CD14-positive monocyte (primary cell): ENCODE measurements at regions of chr20 and their contacts with region 1.

Region 1: GRCh38 chr20:10476319-10476724 is 41.2 kb downstream of the SLX4IP start:
- DNase-seq: peak; percentile 70 to 85 (median 83)
- H3K4me3 ChIP-seq: peak overlapping the region in 1 of 3 experiments; percentile 45
- H3K4me3 Mint-ChIP-seq: peak overlapping the region in 1 of 2 donors; percentile 55
- H3K27ac ChIP-seq: peak overlapping the region in 1 of 2 donors; percentile 41
- H3K27ac Mint-ChIP-seq: peak overlapping the region; percentile 74 to 87 (median 80)
- H3K4me1 ChIP-seq: peaks cover 32 to 35% of the 10 kb centered on the region in 2 donors
- H3K4me1 Mint-ChIP-seq: peaks cover 30% of the 10 kb centered on the region
- H3K27me3 ChIP-seq: no peaks in the 10 kb centered on the region
- H3K27me3 Mint-ChIP-seq: no peaks in the 10 kb centered on the region
- CTCF ChIP-seq: peak; percentile 28

Region 2: GRCh38 chr20:10398822-10399369 is 77.4 kb before region 1 on chr20:
- intact Hi-C with region 1: no loop called
- DNase-seq: no peak
- H3K4me3 ChIP-seq: no peak overlapping the region
- H3K4me3 Mint-ChIP-seq: no peak overlapping the region
- H3K27ac ChIP-seq: no peak overlapping the region
- H3K27ac Mint-ChIP-seq: no peak overlapping the region
- H3K4me1 ChIP-seq: peaks cover 2 to 6% of the 10 kb centered on the region in 2 donors
- H3K4me1 Mint-ChIP-seq: peaks cover 9% of the 10 kb centered on the region
- H3K27me3 ChIP-seq: no peaks in the 10 kb centered on the region
- H3K27me3 Mint-ChIP-seq: no peaks in the 10 kb centered on the region
- CTCF ChIP-seq: no peak

Region 3: DNA sequence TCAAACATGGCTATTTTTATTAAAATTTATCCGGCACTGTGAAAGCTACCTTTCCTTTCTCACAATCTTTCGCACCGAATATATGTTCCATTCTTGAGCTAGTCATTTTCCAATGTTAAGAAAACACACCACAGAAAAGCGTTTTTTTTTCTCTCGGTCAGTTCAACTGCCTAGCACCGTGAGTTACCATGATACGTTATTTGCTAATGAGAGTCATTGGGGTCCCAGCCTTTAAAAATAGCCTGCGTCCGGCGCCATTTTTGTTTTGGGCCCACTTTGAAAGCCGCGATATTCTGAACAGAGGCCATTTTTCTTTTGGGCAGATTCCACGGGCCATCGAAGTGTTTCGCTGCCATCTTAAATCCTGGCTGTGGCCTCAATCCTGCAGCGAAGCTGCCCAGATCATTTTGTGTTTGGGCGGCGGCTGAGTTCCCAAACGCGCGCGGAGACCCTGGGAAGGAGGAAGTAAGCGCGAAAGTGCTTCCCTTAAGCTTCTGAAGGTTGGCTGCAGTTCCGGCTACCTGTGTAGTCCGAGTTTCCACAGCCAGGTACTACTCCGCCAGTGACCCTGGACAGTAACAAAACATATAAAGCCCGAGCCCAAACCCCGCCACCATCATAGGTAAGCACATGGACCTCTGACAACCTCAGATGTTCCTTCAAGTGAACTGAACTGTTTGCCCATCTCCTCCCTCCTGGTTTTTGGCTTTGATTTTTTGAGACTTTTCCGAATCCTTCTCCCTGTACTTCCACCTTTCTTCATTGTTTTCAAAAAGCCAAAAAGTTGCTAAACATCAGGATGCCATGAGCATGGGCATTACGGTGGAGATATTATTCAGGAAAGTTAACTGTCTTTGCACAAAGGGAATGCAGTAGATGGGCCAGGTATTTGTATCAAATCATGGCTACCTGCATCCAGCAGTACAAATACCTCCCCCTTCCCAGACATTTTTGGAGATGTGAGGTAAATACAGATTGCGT is 41.2 kb before region 1 on chr20 and contains the start of gene SLX4IP:
- intact Hi-C with region 1: loop called in 1 of 2 experiments (anchors 5 kb)
- DNase-seq: peak; percentile 91 to 95 (median 94)
- H3K4me3 ChIP-seq: peak within 1 kb of the TSS; percentile 76 to 93 (median 88)
- H3K4me3 Mint-ChIP-seq: peak within 1 kb of the TSS; percentile 92 to 94
- H3K27ac ChIP-seq: peak within 1 kb of the TSS; percentile 84 to 91
- H3K27ac Mint-ChIP-seq: peak within 1 kb of the TSS; percentile 92 to 96 (median 95)
- H3K4me1 ChIP-seq: peaks cover 21 to 33% of the 10 kb centered on the region in 2 donors
- H3K4me1 Mint-ChIP-seq: peaks cover 40% of the 10 kb centered on the region
- H3K27me3 ChIP-seq: no peaks in the 10 kb centered on the region
- H3K27me3 Mint-ChIP-seq: no peaks in the 10 kb centered on the region
- CTCF ChIP-seq: no peak
- polyA plus RNA-seq, gene SLX4IP: 0.76 to 2.5 (median 1.1) TPM

Region 4: GRCh38 chr20:10511509-10512251 is 35.4 kb after region 1 on chr20:
- intact Hi-C with region 1: loop called in 1 of 2 experiments (anchors 5 kb)
- DNase-seq: peak; percentile 95 to 99 (median 98)
- H3K4me3 ChIP-seq: peak overlapping the region in 1 of 3 experiments; percentile 44
- H3K4me3 Mint-ChIP-seq: peak overlapping the region; percentile 34 to 77
- H3K27ac ChIP-seq: peak overlapping the region; percentile 12 to 79
- H3K27ac Mint-ChIP-seq: peak overlapping the region; percentile 88 to 95 (median 93)
- H3K4me1 ChIP-seq: peaks cover 44 to 54% of the 10 kb centered on the region in 2 donors
- H3K4me1 Mint-ChIP-seq: peaks cover 58% of the 10 kb centered on the region
- H3K27me3 ChIP-seq: no peaks in the 10 kb centered on the region
- H3K27me3 Mint-ChIP-seq: peaks cover 2 to 3% (median 2%) of the 10 kb centered on the region in 3 donors
- CTCF ChIP-seq: no peak

Region 5: DNA sequence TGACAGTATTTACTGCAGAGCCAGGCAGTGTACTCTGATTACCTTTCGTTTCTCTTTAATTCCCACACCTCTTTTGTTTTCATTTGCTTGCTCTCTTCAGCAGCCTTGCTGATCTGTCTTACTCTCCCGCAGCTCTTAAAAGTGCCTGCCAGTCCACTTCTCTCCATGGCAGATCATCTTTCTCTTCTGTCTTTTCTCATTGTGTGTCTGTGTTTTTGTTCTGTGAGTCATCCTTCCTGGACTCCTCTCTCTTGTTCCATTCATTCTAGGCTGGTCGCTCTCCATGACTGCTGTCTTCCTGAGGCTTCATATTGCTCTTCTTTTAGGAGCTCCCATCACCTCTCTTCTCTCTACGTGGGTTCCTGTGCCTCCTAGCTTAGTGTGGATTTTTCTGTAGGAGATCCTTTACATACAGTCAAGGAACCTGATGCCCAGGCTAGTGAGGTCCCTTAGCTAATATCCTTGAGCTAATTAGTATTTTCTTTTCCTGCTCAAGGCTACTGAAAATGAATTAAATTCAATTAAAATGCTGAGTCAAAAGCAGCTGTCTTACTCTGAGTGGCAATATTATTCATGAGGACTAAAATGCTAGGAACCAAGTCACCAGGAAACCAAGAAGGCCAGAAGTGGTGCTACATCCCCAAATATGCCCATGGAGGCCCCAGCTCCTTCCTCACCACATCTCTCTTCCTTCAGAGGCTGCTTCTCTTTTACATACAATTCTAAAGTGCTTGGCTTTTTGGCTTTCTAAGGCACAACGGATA is 44.9 kb after region 1 on chr20:
- intact Hi-C with region 1: loop called in 1 of 2 experiments (anchors 10 kb)
- DNase-seq: no peak
- H3K4me3 ChIP-seq: no peak overlapping the region
- H3K4me3 Mint-ChIP-seq: no peak overlapping the region
- H3K27ac ChIP-seq: no peak overlapping the region
- H3K27ac Mint-ChIP-seq: peak overlapping the region in 3 of 7 donors; percentile 1 to 50 (median 17)
- H3K4me1 ChIP-seq: peaks cover 8 to 10% of the 10 kb centered on the region in 2 donors
- H3K4me1 Mint-ChIP-seq: peaks cover 18% of the 10 kb centered on the region
- H3K27me3 ChIP-seq: no peaks in the 10 kb centered on the region
- H3K27me3 Mint-ChIP-seq: no peaks in the 10 kb centered on the region
- CTCF ChIP-seq: no peak